Dendritic cell treated with granulocyte-macrophage colony-stimulating factor and Interleukin-4, amounts not matched to agents 40 ng/mL and 50 ng/mL, for 4 days (primary cell): ENCODE measurements at regions of chr1 and their contacts with region 1.

Region 1: DNA sequence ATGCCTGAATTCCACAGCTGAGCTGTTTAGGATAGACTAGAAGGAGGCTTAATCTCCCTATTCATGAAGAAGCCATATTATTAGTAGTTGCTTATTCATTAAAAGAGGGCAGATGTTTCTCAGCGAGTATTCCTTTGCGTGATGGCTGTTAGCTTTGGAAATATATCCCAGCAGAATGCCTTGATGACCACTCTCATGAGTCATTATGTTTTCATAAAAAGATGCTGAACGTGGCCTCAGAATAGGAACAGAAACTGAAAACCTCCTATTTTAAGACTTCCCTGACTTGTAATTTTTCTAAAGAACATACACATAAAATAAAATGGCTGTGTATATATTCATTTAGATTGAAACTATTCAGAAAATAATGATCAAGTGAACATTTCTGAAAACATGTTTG is 9.6 kb upstream of the PLA2G4A start:
- H3K4me3 Mint-ChIP-seq: no peak overlapping the region
- H3K27ac Mint-ChIP-seq: peak overlapping the region; percentile 46
- H3K4me1 Mint-ChIP-seq: peaks cover 17% of the 10 kb centered on the region
- H3K27me3 Mint-ChIP-seq: no peaks in the 10 kb centered on the region

Region 2: DNA sequence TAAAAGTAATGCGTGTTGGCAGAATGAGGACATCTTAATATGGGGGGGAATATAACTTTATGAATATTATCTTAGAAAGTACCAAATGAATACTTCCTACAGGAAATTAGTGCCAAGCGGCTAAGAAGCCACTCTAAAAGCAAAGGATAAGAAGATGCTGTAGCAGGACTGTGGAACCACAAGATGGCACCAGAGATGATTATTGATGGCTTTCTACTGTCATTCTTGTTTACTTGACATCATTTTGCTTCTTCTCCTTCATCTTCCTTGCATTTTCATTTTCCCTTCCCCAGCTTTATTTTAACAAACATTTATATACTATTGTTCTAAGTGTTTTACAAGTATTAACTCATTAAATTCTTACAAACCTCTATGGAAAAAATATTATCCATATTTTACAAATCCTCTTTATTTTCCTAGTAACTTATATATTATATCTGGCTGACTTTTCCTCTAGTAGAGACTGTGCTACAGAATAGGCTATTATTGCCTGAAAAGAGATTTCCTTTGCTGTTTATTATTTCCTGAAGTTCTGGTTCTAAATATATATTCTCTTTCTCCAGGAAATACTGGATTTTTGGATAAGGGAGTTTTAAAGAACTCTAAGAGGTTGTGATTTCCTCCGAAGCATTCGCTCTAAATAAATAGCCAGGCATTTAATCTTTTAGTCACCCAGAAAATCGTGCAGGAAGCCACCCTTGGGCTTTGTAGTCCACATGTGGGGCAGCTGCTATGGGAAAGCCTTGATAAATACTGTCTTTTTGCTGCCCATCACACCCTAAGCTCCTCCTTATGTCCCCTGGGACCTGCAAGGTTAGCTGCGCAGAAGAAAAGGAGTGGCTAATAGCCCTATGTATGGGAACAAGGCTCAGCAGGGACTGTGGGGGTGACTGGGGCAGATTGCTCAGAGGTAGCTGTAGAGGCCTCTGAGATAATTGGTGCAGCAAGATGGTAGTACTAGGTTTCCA is 513.9 kb before region 1 on chr1:
- intact Hi-C with region 1: no loop called
- H3K4me3 Mint-ChIP-seq: no peak overlapping the region
- H3K27ac Mint-ChIP-seq: no peak overlapping the region
- H3K4me1 Mint-ChIP-seq: no peaks in the 10 kb centered on the region
- H3K27me3 Mint-ChIP-seq: no peaks in the 10 kb centered on the region

Region 3: DNA sequence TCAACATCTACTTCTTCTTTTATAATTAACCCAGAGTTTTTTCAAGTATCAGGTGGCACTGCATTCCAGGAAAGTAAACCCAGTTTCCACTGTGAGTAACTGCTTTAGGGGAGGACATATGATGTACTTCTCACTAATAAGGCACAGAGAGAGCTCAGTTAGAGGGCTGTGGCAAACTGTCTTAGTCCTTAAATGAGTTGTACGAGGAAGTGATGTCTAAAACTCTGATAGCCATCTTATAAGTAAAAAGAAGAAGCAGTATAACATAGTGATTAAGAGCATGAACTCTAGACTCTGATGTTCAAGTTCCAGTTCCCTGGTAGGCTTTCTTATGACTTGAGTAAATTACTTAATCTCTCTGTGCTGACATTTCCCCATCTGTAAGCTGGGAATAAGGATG is 80.2 kb before region 1 on chr1:
- intact Hi-C with region 1: loop called (anchors 10 kb)
- H3K4me3 Mint-ChIP-seq: no peak overlapping the region
- H3K27ac Mint-ChIP-seq: peak overlapping the region; percentile 66
- H3K4me1 Mint-ChIP-seq: peaks cover 24% of the 10 kb centered on the region
- H3K27me3 Mint-ChIP-seq: no peaks in the 10 kb centered on the region